Activated CD4-positive, alpha-beta T cell treated with anti-CD3 and anti-CD28 coated beads for 36 hours (primary cell): ENCODE measurements at regions of chr1 and their contacts with region 1.

Region 1: DNA sequence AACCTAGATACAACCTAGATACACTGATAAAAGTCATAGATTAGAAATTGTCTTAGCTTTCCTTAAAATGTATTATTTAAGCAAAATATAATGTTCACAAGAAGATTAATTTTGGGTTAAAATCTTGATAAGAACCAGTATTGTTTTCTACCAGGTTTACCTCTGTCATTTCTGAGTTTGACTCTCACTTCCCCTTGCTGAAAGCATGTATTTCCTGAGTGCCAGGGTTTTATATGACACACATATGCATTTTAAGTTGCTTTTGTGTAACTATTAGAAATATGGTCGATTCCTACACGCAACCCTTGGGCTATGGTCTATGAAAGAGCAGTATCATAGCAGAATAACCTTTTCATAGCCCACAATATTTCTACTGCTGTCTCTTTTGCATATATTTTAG is 351.7 kb downstream of the ZP4 start:
- DNase-seq: no peak
- ATAC-seq: no peak
- H3K4me3 Mint-ChIP-seq: no peak overlapping the region
- H3K27ac Mint-ChIP-seq: no peak overlapping the region
- H3K4me1 Mint-ChIP-seq: no peaks in the 10 kb centered on the region
- H3K27me3 Mint-ChIP-seq: no peaks in the 10 kb centered on the region

Region 2: GRCh38 chr1:238690415-238690814 is 1151.4 kb after region 1 on chr1:
- CTCF ChIA-PET with region 1: no interaction called
- POLR2A ChIA-PET with region 1: no interaction called
- intact Hi-C with region 1: loop called in 1 of 2 experiments (anchors 5 kb)
- DNase-seq: no peak
- ATAC-seq: no peak
- H3K4me3 Mint-ChIP-seq: no peak overlapping the region
- H3K27ac Mint-ChIP-seq: no peak overlapping the region
- H3K4me1 Mint-ChIP-seq: no peaks in the 10 kb centered on the region
- H3K27me3 Mint-ChIP-seq: no peaks in the 10 kb centered on the region